H1 (cell line): ENCODE measurements at regions of chr6 and their contacts with region 1.

Region 1: GRCh38 chr6:31575335-31575901 is at the start of gene TNF:
- DNase-seq: no peak
- H3K4me3 ChIP-seq: no peak within 1 kb of the TSS
- H3K27ac ChIP-seq: no peak within 1 kb of the TSS
- H3K4me1 ChIP-seq: peaks cover 0 to 3% (median 0%) of the 10 kb centered on the region in 4 experiments; a peak in 3 of 7 replicates
- H3K27me3 ChIP-seq: peaks cover 0 to 7% (median 6%) of the 10 kb centered on the region in 4 experiments; a peak in 5 of 7 replicates
- CTCF ChIP-seq: no peak
- EP300 ChIP-seq: no peak
- POLR2A ChIP-seq: no peak
- RAD21 ChIP-seq: no peak
- total RNA-seq, gene TNF: not detected in 2 replicates

Region 2: GRCh38 chr6:31559958-31560696 is 15.3 kb before region 1 on chr6:
- CTCF ChIA-PET with region 1: interaction called, 26 read pairs
- POLR2A ChIA-PET with region 1: interaction called, 110 read pairs
- DNase-seq: no peak
- H3K4me3 ChIP-seq: no peak overlapping the region
- H3K27ac ChIP-seq: no peak overlapping the region
- H3K4me1 ChIP-seq: no peaks in the 10 kb centered on the region
- H3K27me3 ChIP-seq: no peaks in the 10 kb centered on the region
- CTCF ChIP-seq: no peak
- EP300 ChIP-seq: no peak
- POLR2A ChIP-seq: no peak
- RAD21 ChIP-seq: no peak

Region 3: DNA sequence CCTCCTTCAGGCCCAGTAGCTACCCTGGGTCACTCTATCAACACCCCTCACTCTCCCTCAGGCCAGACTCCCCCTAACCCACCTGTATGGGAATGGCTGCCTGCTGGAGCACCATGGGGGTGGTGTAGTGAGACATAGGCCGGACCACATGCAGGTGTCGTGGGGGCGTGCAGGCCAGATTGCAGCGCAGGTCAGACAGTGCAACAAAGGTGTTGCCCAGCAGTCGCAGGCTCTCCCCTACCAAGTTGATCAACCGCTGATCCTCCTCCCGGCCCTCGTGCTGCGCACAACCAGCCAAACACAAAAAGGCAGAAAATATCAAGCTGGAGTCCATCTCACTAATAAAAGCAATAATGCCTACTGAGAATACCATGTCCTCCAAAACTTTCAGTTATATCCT is 69.9 kb after region 1 on chr6:
- CTCF ChIA-PET with region 1: no interaction called
- POLR2A ChIA-PET with region 1: no interaction called
- DNase-seq: no peak
- H3K4me3 ChIP-seq: no peak overlapping the region
- H3K27ac ChIP-seq: no peak overlapping the region
- H3K4me1 ChIP-seq: no peaks in the 10 kb centered on the region
- H3K27me3 ChIP-seq: no peaks in the 10 kb centered on the region
- CTCF ChIP-seq: no peak
- EP300 ChIP-seq: no peak
- POLR2A ChIP-seq: no peak
- RAD21 ChIP-seq: no peak